CD4-positive, alpha-beta T cell (primary cell): ENCODE measurements at regions of chr22 and their contacts with region 1.

Region 1: GRCh38 chr22:28594797-28595462 is 84.7 kb downstream of the TTC28 start:
- DNase-seq: peak in 3 of 14 experiments; percentile 40 to 55 (median 51)
- ATAC-seq: peak; percentile 68
- H3K4me3 ChIP-seq: no peak overlapping the region
- H3K4me3 Mint-ChIP-seq: no peak overlapping the region
- H3K27ac ChIP-seq: no peak overlapping the region
- H3K27ac Mint-ChIP-seq: no peak overlapping the region
- H3K4me1 ChIP-seq: no peaks in the 10 kb centered on the region
- H3K4me1 Mint-ChIP-seq: no peaks in the 10 kb centered on the region
- H3K27me3 ChIP-seq: peaks cover 0 to 6% of the 10 kb centered on the region in 2 experiments
- H3K27me3 Mint-ChIP-seq: peaks cover 28% of the 10 kb centered on the region
- CTCF ChIP-seq: peak; percentile 84

Region 2: DNA sequence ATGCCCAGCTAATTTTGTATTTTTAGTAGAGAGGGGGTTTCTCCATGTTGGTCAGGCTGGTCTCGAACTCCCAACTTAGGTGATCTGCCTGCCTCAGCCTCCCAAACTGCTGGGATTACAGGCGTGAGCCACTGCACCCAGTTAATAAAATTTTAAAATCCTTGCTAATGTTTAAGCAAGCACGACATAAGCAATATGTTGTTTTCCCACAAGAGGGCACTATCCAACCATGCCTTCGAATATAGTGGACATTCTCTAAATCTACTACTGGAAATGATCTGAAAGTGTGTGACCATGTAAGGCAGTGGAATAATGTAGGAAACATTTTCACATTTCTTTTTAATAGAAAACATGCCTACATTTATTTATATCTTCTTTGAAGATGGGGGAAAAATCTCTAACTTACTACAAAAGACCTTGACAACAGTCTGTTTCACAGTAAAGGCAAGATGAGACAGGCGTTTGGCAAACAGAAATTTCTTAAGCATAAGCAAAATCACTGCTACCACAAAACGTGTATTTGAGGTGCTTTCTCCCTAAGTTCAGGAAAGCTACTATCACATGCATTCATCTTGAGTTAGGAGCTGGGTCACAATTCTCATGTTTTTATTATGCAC is 714.0 kb before region 1 on chr22:
- CTCF ChIA-PET with region 1: no interaction called
- POLR2A ChIA-PET with region 1: no interaction called
- intact Hi-C with region 1: loop called (anchors 1 to 2 kb)
- DNase-seq: peak in 4 of 14 experiments; percentile 6 to 66 (median 53)
- ATAC-seq: peak; percentile 52
- H3K4me3 ChIP-seq: no peak overlapping the region
- H3K4me3 Mint-ChIP-seq: no peak overlapping the region
- H3K27ac ChIP-seq: no peak overlapping the region
- H3K27ac Mint-ChIP-seq: no peak overlapping the region
- H3K4me1 ChIP-seq: peaks cover 3% of the 10 kb centered on the region
- H3K4me1 Mint-ChIP-seq: peaks cover 37% of the 10 kb centered on the region
- H3K27me3 ChIP-seq: no peaks in the 10 kb centered on the region
- H3K27me3 Mint-ChIP-seq: no peaks in the 10 kb centered on the region
- CTCF ChIP-seq: peak; percentile 63

Region 3: DNA sequence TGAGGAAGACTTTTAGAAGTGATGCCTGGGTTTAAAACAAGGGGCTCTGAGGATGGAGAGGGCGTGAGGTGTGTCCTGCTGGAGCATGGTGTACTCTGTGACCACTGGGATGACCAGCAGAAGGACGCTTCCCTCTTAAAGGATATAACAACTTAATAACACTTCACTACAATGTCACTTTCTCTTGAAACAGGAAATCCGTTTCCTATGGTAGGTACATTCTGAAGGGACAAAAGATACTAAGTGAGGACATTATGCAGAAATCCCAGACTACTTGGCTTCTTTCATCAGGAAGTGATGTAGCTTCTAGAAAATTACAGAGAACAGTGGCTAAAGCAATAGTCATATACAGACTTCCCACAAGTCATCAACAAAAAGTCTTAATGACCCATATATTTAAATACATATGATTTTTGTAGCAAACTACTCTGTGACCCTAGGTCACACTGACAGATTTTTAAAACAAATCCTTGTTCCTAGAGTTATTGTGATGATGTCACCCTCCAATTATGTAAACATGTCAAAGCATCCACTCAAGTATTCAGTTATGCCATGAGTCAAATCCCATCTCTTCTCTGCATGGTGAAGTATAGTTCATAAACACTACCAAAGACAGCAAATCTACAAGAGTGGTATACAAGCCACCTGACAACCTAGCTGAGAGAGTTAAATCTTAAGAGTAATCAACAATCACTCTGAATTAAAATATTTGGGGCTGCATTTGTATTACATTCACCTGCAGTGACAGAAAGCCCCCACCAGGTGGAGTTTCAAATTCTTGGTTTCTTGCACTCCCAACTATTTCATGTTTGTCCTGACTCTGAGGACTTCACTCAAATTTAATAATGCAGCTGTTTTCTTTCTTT is 708.7 kb before region 1 on chr22:
- CTCF ChIA-PET with region 1: no interaction called
- POLR2A ChIA-PET with region 1: no interaction called
- intact Hi-C with region 1: loop called (anchors 1 to 2 kb)
- DNase-seq: peak; percentile 13 to 65 (median 30)
- ATAC-seq: peak; percentile 55
- H3K4me3 ChIP-seq: no peak overlapping the region
- H3K4me3 Mint-ChIP-seq: no peak overlapping the region
- H3K27ac ChIP-seq: no peak overlapping the region
- H3K27ac Mint-ChIP-seq: peak overlapping the region; percentile 27
- H3K4me1 ChIP-seq: no peaks in the 10 kb centered on the region
- H3K4me1 Mint-ChIP-seq: peaks cover 21% of the 10 kb centered on the region
- H3K27me3 ChIP-seq: no peaks in the 10 kb centered on the region
- H3K27me3 Mint-ChIP-seq: no peaks in the 10 kb centered on the region
- CTCF ChIP-seq: peak; percentile 88

Region 4: GRCh38 chr22:28019881-28020871 is 574.8 kb before region 1 on chr22:
- CTCF ChIA-PET with region 1: interaction called, 4 read pairs
- POLR2A ChIA-PET with region 1: no interaction called
- intact Hi-C with region 1: loop called (anchors 1 kb)
- DNase-seq: peak; percentile 44 to 74 (median 55)
- ATAC-seq: peak; percentile 84
- H3K4me3 ChIP-seq: no peak overlapping the region
- H3K4me3 Mint-ChIP-seq: no peak overlapping the region
- H3K27ac ChIP-seq: no peak overlapping the region
- H3K27ac Mint-ChIP-seq: no peak overlapping the region
- H3K4me1 ChIP-seq: peaks cover 6% of the 10 kb centered on the region
- H3K4me1 Mint-ChIP-seq: no peaks in the 10 kb centered on the region
- H3K27me3 ChIP-seq: no peaks in the 10 kb centered on the region
- H3K27me3 Mint-ChIP-seq: no peaks in the 10 kb centered on the region
- CTCF ChIP-seq: peak; percentile 87

Region 5: DNA sequence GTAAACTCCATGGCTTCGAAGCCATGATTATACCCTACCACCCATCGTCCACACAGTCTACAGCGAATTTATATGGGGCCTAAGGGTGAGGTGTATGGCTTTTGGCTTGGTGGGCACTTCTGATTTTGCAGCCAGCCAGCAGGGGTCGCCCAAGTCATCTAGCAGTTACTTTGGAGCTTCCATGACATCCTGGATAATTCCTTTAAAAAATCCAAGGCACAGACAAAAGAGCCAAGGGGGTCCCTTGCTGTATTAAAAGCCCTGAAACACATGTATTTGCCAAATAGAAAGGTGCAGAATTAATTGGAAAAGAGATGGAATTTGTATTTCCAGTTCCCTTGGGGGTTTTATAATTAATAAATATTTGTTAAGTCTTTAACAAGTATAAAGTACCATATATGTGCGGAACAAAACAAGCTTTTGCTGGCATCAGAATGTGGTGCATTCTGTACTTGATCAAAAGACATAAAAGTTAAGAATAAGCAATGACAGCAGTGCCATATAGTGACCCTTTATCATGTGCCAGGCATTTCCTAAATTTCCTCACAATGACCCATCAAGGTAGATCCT is 543.1 kb before region 1 on chr22:
- CTCF ChIA-PET with region 1: no interaction called
- POLR2A ChIA-PET with region 1: no interaction called
- intact Hi-C with region 1: loop called (anchors 1 to 2 kb)
- DNase-seq: peak in 7 of 14 experiments; percentile 6 to 46 (median 18)
- ATAC-seq: no peak
- H3K4me3 ChIP-seq: no peak overlapping the region
- H3K4me3 Mint-ChIP-seq: no peak overlapping the region
- H3K27ac ChIP-seq: no peak overlapping the region
- H3K27ac Mint-ChIP-seq: no peak overlapping the region
- H3K4me1 ChIP-seq: no peaks in the 10 kb centered on the region
- H3K4me1 Mint-ChIP-seq: no peaks in the 10 kb centered on the region
- H3K27me3 ChIP-seq: no peaks in the 10 kb centered on the region
- H3K27me3 Mint-ChIP-seq: no peaks in the 10 kb centered on the region
- CTCF ChIP-seq: peak; percentile 60

Region 6: GRCh38 chr22:28736296-28737155 is 141.6 kb after region 1 on chr22:
- CTCF ChIA-PET with region 1: no interaction called
- POLR2A ChIA-PET with region 1: no interaction called
- intact Hi-C with region 1: no loop called
- DNase-seq: no peak
- ATAC-seq: no peak
- H3K4me3 ChIP-seq: no peak overlapping the region
- H3K4me3 Mint-ChIP-seq: no peak overlapping the region
- H3K27ac ChIP-seq: no peak overlapping the region
- H3K27ac Mint-ChIP-seq: no peak overlapping the region
- H3K4me1 ChIP-seq: peaks cover 6% of the 10 kb centered on the region
- H3K4me1 Mint-ChIP-seq: peaks cover 12% of the 10 kb centered on the region
- H3K27me3 ChIP-seq: no peaks in the 10 kb centered on the region
- H3K27me3 Mint-ChIP-seq: no peaks in the 10 kb centered on the region
- CTCF ChIP-seq: no peak